GM10248 (cell line): ENCODE measurements at regions of chr17 and their contacts with region 1.

Region 1: DNA sequence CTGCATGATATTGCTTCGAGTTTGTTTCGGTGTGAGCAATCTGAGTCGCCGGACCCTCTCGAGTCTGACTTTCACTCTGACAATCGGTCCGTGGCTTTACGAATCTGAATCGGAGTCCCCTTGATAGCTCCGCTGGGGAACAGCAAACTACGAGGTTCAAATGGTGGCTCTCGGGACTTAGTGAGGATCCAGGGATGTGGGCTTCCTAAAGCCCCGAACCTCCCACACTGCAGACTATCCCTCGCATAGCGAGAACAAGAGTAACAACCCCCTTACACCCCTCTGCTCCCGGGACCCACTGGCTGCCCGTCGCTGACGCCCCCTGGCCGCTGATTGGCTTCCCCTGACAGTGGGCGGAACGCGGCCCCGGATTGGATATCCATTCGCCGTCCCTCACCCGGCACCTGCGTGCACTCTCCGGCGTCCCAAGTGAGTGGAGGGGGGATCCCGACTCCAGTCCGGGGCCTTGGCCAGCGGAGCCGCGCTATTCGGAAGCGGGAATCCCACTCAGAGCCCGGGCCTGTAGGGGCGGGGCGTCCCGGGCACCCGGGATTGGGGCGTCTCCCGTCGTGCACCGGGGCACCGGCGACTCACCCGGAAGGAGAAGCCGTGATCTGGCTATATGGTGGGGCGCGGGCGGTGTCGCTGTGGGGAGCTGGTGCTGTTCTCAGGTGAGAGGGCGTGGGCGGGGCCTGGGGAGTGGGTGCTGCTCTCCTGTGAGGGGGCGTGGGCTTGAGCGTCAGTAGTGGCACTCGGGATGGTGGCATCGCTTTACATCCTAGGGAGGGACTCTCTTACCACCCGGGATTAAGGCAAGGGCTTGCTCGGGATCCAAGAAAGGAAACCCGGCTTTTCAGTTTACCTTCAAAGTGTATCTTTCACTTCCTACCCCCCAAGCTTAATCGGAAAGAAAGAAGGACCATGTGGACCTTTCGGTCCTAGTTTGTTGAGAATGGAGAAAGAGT is at the start of gene SNX11:
- DNase-seq: peak; percentile 86
- CTCF ChIP-seq: peak; percentile 19

Region 2: GRCh38 chr17:48002266-48002915 is 105.1 kb before region 1 on chr17:
- CTCF ChIA-PET with region 1: no interaction called
- POLR2A ChIA-PET with region 1: no interaction called
- DNase-seq: peak; percentile 68
- CTCF ChIP-seq: no peak

Region 3: GRCh38 chr17:48093341-48094045 is 14.0 kb before region 1 on chr17:
- CTCF ChIA-PET with region 1: interaction called, 36 read pairs
- POLR2A ChIA-PET with region 1: interaction called, 7 read pairs
- DNase-seq: no peak
- CTCF ChIP-seq: no peak

Region 4: GRCh38 chr17:48123111-48123510 is 15.7 kb after region 1 on chr17:
- CTCF ChIA-PET with region 1: interaction called, 38 read pairs
- POLR2A ChIA-PET with region 1: interaction called, 3 read pairs
- DNase-seq: no peak
- CTCF ChIP-seq: no peak

Region 5: GRCh38 chr17:48148854-48149786 is 41.7 kb after region 1 on chr17:
- CTCF ChIA-PET with region 1: no interaction called
- POLR2A ChIA-PET with region 1: no interaction called
- DNase-seq: no peak
- CTCF ChIP-seq: no peak

Region 6: DNA sequence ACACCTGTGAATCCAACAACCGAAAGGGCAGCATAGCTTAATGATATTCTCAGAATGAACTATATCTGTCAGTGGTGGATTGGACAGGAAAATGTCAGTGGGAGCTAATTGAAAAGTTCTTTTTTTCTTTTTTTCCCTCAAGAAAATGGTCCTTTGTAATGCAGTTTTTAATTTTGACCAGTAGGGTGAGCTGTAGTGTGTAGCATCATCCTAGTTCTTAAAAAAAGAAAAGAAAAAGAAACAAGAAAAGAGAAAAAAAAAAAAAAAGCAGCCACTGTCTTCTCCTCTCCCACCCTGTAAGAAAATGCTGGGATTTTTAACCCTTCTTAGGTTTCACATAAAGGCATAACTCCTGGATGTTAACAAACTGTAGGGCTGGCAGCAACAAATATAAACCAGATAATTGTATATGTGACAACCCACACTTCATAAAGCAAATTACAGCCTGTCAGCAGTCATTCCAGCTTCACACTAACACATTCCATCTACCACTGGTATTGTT is 244.4 kb after region 1 on chr17:
- CTCF ChIA-PET with region 1: no interaction called
- POLR2A ChIA-PET with region 1: no interaction called
- DNase-seq: peak; percentile 36
- CTCF ChIP-seq: peak; percentile 62